OCI-LY7 (cell line): ENCODE measurements at regions of chr3 and their contacts with region 1.

Region 1: DNA sequence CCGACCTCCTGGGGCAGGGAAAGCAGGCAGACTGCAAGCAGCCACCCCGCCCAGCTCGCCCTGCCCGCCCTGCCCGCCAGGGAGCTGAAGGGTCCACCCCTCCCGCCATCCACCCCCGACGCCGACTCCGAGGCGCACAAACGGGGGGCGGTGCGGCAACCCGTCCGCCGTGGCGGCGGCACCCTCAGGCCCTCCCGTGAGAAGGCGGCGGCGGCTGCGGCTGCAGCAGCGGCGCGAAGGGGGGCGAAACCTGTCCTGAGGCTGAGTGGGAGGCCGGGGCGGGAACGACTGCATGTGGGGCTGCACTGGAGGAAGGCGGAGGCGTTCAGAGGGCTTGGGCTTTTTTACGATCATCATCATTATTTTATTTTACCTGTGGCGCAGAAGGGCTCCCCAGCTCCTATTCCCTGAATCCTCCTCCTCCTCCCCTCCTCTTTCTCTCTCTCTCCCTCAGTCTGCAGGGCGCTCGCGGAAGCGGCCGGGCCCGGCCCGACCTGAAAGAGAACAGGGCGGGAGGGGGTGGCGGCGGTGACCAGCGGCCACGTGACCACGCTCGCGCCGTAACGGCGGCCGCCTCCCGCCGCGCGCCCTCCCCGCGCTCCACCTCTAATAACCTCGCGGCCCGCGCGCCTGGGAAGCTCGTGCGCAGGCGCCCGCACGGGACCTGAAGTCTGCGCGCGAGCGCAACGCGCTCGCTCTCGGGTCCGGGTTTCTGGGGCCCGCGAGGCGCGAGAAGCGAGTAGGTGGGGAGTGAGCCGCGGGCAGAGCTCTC is at the start of gene TBC1D5:
- DNase-seq: peak; percentile 98
- H3K4me3 ChIP-seq: peak within 1 kb of the TSS; percentile 81
- H3K27ac ChIP-seq: peak within 1 kb of the TSS; percentile 91
- H3K4me1 ChIP-seq: peaks cover 57% of the 10 kb centered on the region
- CTCF ChIP-seq: no peak
- total RNA-seq, gene TBC1D5: 82.4 and 85.5 TPM in 2 replicates

Region 2: DNA sequence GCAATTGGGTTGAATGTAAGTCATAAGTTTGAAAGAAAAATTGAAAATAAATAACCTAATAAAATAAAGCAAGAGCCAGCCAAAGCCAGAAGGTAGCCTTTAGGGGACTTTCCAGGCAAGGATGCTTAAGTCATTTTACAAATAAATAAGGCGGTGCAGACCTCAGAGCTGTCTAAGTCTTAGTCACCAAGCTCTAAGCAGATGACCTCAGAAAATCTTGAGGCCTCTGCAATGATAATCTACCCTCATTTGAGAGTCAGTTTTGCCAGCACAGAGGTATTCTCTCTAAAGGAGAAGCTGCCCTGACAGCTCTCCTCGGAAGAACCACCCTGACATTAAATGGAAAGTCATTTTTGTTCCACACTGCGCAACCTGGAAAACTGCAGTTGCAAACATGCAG is 1363.4 kb before region 1 on chr3:
- CTCF ChIA-PET with region 1: no interaction called
- POLR2A ChIA-PET with region 1: no interaction called
- intact Hi-C with region 1: loop called (anchors 10 kb)
- DNase-seq: no peak
- H3K4me3 ChIP-seq: peak overlapping the region; percentile 4
- H3K27ac ChIP-seq: peak overlapping the region; percentile 99
- H3K4me1 ChIP-seq: peaks cover 96% of the 10 kb centered on the region
- CTCF ChIP-seq: no peak

Region 3: DNA sequence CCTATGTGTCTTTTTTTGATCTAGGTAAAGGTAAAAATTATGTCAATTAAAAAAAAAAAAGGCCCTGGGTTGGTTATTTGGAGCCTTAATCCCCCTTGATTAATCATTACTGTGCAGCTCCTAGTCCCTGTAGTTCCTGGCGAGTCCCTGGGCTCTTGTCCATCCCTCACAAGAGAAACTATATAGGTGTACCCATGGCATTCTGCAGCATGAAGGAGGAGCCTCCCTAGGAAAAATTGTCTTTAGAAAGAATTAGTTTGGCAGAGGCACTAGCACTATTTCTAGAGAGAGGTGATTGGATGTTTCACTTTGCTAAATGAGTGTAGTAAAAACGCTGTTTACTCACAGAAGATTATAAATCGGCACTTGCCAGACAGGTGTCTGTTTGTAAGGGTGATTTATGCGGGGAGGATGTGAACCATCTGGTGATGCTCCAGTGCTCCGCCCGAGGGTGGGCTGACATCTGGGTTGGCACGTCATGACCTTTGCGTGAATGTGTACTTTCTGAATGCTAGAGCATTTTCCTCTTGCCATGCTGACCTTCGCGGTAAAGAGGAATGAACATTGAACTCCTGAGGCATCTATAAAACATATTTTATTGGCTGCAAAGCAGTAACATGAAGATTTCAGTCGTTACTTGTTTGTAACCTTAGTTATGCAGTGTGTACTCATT is 844.9 kb before region 1 on chr3:
- CTCF ChIA-PET with region 1: no interaction called
- POLR2A ChIA-PET with region 1: interaction called, 3 read pairs
- intact Hi-C with region 1: loop called (anchors 10 kb)
- DNase-seq: peak; percentile 91
- H3K4me3 ChIP-seq: peak overlapping the region; percentile 65
- H3K27ac ChIP-seq: peak overlapping the region; percentile 77
- H3K4me1 ChIP-seq: peaks cover 94% of the 10 kb centered on the region
- CTCF ChIP-seq: no peak

Region 4: GRCh38 chr3:17800232-17800631 is 57.9 kb after region 1 on chr3:
- CTCF ChIA-PET with region 1: no interaction called
- POLR2A ChIA-PET with region 1: no interaction called
- intact Hi-C with region 1: no loop called
- DNase-seq: no peak
- H3K4me3 ChIP-seq: no peak overlapping the region
- H3K27ac ChIP-seq: no peak overlapping the region
- H3K4me1 ChIP-seq: no peaks in the 10 kb centered on the region
- CTCF ChIP-seq: no peak

Region 5: GRCh38 chr3:18071833-18072232 is 329.5 kb after region 1 on chr3:
- CTCF ChIA-PET with region 1: no interaction called
- POLR2A ChIA-PET with region 1: no interaction called
- intact Hi-C with region 1: no loop called
- DNase-seq: no peak
- H3K4me3 ChIP-seq: no peak overlapping the region
- H3K27ac ChIP-seq: no peak overlapping the region
- H3K4me1 ChIP-seq: no peaks in the 10 kb centered on the region
- CTCF ChIP-seq: no peak

Region 6: DNA sequence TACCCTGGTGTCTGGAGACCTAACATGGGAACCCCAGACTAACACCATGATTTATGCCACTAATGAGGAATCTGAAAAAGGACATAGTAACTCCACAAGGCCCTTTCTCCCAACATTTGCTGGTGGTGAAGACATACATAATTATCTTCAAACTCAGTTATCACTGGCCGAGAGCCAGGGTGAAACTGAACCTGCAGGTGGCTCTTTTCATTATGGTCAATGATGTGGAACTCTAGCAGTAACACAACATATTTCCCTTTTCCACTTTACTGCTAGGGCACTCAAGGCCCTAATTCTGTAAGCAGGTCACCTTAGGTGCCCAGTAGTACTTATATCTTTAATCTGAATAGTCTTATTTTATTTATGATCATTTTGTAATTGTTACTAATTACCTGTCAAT is 1009.2 kb after region 1 on chr3:
- CTCF ChIA-PET with region 1: no interaction called
- POLR2A ChIA-PET with region 1: interaction called, 3 read pairs
- intact Hi-C with region 1: loop called (anchors 5 kb)
- DNase-seq: peak; percentile 91
- H3K4me3 ChIP-seq: peak overlapping the region; percentile 45
- H3K27ac ChIP-seq: peak overlapping the region; percentile 91
- H3K4me1 ChIP-seq: peaks cover 72% of the 10 kb centered on the region
- CTCF ChIP-seq: no peak